CD4-positive, alpha-beta T cell (primary cell): ENCODE measurements at regions of chr2 and their contacts with region 1.

Region 1: DNA sequence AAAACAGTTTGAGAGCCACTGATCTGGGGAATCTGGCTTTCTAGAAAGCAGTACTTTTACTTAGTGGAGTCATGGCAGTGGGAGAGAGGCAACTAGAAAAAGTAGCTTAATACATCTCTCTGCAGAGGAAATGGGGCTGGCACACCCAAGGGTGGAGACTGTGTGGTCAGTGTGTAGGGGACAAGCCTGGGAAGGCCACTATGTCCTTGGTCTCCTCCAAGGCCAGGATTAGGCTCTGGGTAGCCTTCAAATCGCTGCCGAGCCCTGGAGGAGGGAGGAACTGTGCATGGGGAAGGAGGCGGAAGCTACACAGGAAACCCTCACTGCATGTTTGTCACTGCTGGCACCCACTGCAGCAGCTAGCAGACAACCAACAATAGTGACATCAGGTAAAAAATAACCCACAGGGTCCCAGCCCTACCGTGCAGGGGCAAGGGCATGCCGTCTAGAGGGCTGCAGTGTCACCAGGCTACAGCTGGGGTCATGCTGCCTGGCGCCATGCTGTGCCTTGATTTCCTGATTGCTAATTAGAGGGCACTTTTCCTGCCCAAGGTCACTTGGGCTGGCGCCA is 34.8 kb downstream of the LBH start:
- DNase-seq: peak; percentile 53 to 84 (median 70)
- ATAC-seq: peak; percentile 92
- H3K4me3 ChIP-seq: peak overlapping the region; percentile 36
- H3K4me3 Mint-ChIP-seq: peak overlapping the region; percentile 88
- H3K27ac ChIP-seq: peak overlapping the region; percentile 65 to 91
- H3K27ac Mint-ChIP-seq: peak overlapping the region; percentile 95
- H3K4me1 ChIP-seq: peaks cover 59% of the 10 kb centered on the region
- H3K4me1 Mint-ChIP-seq: peaks cover 87% of the 10 kb centered on the region
- H3K27me3 ChIP-seq: no peaks in the 10 kb centered on the region
- H3K27me3 Mint-ChIP-seq: no peaks in the 10 kb centered on the region
- CTCF ChIP-seq: no peak

Region 2: GRCh38 chr2:30208452-30208851 is 57.7 kb before region 1 on chr2:
- CTCF ChIA-PET with region 1: no interaction called
- POLR2A ChIA-PET with region 1: interaction called, 16 read pairs
- intact Hi-C with region 1: no loop called
- DNase-seq: peak in 10 of 14 experiments; percentile 16 to 74 (median 33)
- ATAC-seq: peak; percentile 58
- H3K4me3 ChIP-seq: no peak overlapping the region
- H3K4me3 Mint-ChIP-seq: peak overlapping the region; percentile 42
- H3K27ac ChIP-seq: peak overlapping the region in 1 of 2 donors; percentile 9
- H3K27ac Mint-ChIP-seq: peak overlapping the region; percentile 82
- H3K4me1 ChIP-seq: peaks cover 21% of the 10 kb centered on the region
- H3K4me1 Mint-ChIP-seq: peaks cover 31% of the 10 kb centered on the region
- H3K27me3 ChIP-seq: no peaks in the 10 kb centered on the region
- H3K27me3 Mint-ChIP-seq: no peaks in the 10 kb centered on the region
- CTCF ChIP-seq: peak; percentile 96

Region 3: GRCh38 chr2:30239308-30239985 is 26.7 kb before region 1 on chr2:
- CTCF ChIA-PET with region 1: interaction called, 23 read pairs
- POLR2A ChIA-PET with region 1: interaction called, 373 read pairs
- intact Hi-C with region 1: loop called in 1 of 2 experiments (anchors 5 kb)
- DNase-seq: peak; percentile 49 to 91 (median 71)
- ATAC-seq: peak; percentile 79
- H3K4me3 ChIP-seq: peak overlapping the region; percentile 12
- H3K4me3 Mint-ChIP-seq: peak overlapping the region; percentile 82
- H3K27ac ChIP-seq: peak overlapping the region in 1 of 2 donors; percentile 42
- H3K27ac Mint-ChIP-seq: peak overlapping the region; percentile 99
- H3K4me1 ChIP-seq: peaks cover 89% of the 10 kb centered on the region
- H3K4me1 Mint-ChIP-seq: peaks cover 96% of the 10 kb centered on the region
- H3K27me3 ChIP-seq: no peaks in the 10 kb centered on the region
- H3K27me3 Mint-ChIP-seq: no peaks in the 10 kb centered on the region
- CTCF ChIP-seq: peak; percentile 85

Region 4: GRCh38 chr2:30287857-30288513 is 21.8 kb after region 1 on chr2:
- CTCF ChIA-PET with region 1: no interaction called
- POLR2A ChIA-PET with region 1: interaction called, 11 read pairs
- intact Hi-C with region 1: no loop called
- DNase-seq: no peak
- ATAC-seq: no peak
- H3K4me3 ChIP-seq: no peak overlapping the region
- H3K4me3 Mint-ChIP-seq: peak overlapping the region; percentile 2
- H3K27ac ChIP-seq: no peak overlapping the region
- H3K27ac Mint-ChIP-seq: peak overlapping the region; percentile 3
- H3K4me1 ChIP-seq: peaks cover 10% of the 10 kb centered on the region
- H3K4me1 Mint-ChIP-seq: peaks cover 30% of the 10 kb centered on the region
- H3K27me3 ChIP-seq: no peaks in the 10 kb centered on the region
- H3K27me3 Mint-ChIP-seq: no peaks in the 10 kb centered on the region
- CTCF ChIP-seq: no peak

Region 5: GRCh38 chr2:30336978-30337841 is 71.1 kb after region 1 on chr2:
- CTCF ChIA-PET with region 1: interaction called, 5 read pairs
- POLR2A ChIA-PET with region 1: interaction called, 93 read pairs
- intact Hi-C with region 1: loop called (anchors 2 to 5 kb)
- DNase-seq: peak in 13 of 14 experiments; percentile 21 to 84 (median 52)
- ATAC-seq: peak; percentile 77
- H3K4me3 ChIP-seq: peak overlapping the region; percentile 20
- H3K4me3 Mint-ChIP-seq: peak overlapping the region; percentile 80
- H3K27ac ChIP-seq: peak overlapping the region; percentile 54 to 68
- H3K27ac Mint-ChIP-seq: peak overlapping the region; percentile 98
- H3K4me1 ChIP-seq: peaks cover 76% of the 10 kb centered on the region
- H3K4me1 Mint-ChIP-seq: peaks cover 87% of the 10 kb centered on the region
- H3K27me3 ChIP-seq: no peaks in the 10 kb centered on the region
- H3K27me3 Mint-ChIP-seq: no peaks in the 10 kb centered on the region
- CTCF ChIP-seq: no peak

Region 6: DNA sequence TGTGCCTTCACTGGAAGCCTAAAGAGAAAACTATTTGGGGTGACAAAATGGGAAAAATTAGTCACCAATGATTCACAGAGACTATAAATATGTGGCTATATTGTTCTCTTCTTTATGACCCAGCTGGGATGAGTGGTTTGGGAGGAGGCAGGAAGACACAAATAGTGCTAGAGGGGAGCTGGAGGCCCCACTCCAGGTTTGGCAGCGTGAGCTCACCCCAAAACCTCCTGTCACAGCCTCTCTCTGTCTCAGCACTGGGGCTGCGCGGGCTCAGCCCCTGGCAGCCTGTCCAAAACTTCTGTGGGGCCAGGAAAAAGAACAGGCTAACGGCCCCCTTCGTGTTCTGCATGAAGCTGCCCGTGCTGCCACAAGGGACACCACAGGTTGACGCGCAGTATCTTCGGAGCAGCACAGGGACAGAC is 107.8 kb after region 1 on chr2:
- CTCF ChIA-PET with region 1: no interaction called
- POLR2A ChIA-PET with region 1: no interaction called
- intact Hi-C with region 1: no loop called
- DNase-seq: no peak
- ATAC-seq: no peak
- H3K4me3 ChIP-seq: no peak overlapping the region
- H3K4me3 Mint-ChIP-seq: no peak overlapping the region
- H3K27ac ChIP-seq: no peak overlapping the region
- H3K27ac Mint-ChIP-seq: no peak overlapping the region
- H3K4me1 ChIP-seq: no peaks in the 10 kb centered on the region
- H3K4me1 Mint-ChIP-seq: no peaks in the 10 kb centered on the region
- H3K27me3 ChIP-seq: no peaks in the 10 kb centered on the region
- H3K27me3 Mint-ChIP-seq: no peaks in the 10 kb centered on the region
- CTCF ChIP-seq: no peak

Region 7: DNA sequence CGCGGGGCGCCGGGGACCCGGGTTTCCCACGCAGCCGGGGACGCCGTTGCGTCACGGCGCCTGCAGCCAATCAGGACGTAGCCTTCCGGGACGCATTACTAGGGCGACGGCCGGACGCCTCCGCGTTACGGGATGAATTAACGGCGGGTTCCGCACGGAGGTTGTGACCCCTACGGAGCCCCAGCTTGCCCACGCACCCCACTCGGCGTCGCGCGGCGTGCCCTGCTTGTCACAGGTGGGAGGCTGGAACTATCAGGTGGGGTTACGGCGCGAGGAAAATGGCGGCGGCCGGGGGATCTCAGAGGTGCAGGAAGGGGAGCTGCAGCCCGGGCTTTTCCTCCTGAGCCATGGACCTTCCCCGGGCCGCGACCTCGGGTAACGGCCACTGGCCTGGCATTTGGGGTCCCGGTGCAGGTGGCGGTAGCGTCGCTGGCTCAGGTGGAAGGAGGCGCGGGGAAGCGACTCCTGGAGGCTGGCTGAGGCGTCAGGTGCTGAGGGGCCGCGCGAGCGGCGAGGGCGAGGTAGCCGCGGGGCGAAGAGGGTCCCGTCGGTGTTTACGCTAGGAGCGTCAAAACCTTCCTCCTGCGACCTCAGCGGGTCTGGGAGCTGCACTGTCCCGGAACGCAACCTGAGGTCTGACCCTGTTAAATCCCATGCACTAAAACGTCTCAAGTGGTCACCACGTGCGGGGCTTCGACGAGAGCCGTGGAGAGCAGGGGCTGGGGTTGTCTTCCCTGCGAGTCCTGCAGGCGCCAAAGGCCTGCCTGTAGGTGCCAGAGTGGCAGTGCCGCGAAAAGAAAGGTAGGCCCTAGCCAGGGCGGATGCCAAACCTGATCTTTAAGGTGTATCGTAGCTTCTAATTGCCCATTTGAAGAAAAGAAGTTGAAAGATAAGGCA is 181.3 kb after region 1 on chr2 and contains the start of gene LCLAT1:
- CTCF ChIA-PET with region 1: interaction called, 3 read pairs
- POLR2A ChIA-PET with region 1: interaction called, 5 read pairs
- intact Hi-C with region 1: loop called in 1 of 2 experiments (anchors 10 kb)
- DNase-seq: peak; percentile 68 to 94 (median 78)
- ATAC-seq: peak; percentile 84
- H3K4me3 ChIP-seq: peak within 1 kb of the TSS; percentile 82
- H3K4me3 Mint-ChIP-seq: peak within 1 kb of the TSS; percentile 99
- H3K27ac ChIP-seq: peak within 1 kb of the TSS; percentile 81 to 85
- H3K27ac Mint-ChIP-seq: peak within 1 kb of the TSS; percentile 99
- H3K4me1 ChIP-seq: peaks cover 14% of the 10 kb centered on the region
- H3K4me1 Mint-ChIP-seq: peaks cover 54% of the 10 kb centered on the region
- H3K27me3 ChIP-seq: no peaks in the 10 kb centered on the region
- H3K27me3 Mint-ChIP-seq: no peaks in the 10 kb centered on the region
- CTCF ChIP-seq: no peak
- total RNA-seq, gene LCLAT1: 8.3 to 10.2 TPM

Region 8: DNA sequence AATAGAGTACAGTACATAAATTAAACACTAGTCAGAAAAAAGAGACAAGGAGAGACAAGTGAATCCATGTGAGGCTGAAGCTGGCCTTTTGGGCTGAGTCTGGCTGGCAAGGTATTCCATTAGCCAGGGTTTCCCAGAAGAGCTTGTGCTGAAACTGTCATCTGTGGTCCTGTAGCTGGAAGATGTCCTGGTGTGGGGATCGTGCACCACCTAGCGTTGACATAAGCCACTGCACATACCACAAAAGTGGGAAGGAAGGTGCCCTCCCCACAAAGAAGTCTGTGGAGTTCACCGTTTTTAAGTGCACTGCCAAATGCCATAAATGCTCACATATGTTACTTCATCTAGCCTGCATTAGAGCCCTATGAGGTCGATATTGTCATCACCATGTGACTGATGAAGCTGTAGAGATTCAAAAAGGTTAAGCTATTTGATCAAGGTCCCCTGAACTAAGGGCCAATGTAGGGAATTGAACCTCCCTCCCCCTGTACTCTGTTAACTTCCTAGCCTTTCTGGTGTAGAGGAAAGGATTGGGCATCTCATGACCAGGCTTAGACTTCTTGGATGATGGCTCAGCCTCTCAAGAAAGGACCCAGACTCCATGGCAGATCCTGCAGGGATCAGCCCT is 904.0 kb after region 1 on chr2:
- CTCF ChIA-PET with region 1: no interaction called
- POLR2A ChIA-PET with region 1: no interaction called
- intact Hi-C with region 1: no loop called
- DNase-seq: peak in 12 of 14 experiments; percentile 9 to 73 (median 32)
- ATAC-seq: peak; percentile 54
- H3K4me3 ChIP-seq: no peak overlapping the region
- H3K4me3 Mint-ChIP-seq: no peak overlapping the region
- H3K27ac ChIP-seq: no peak overlapping the region
- H3K27ac Mint-ChIP-seq: no peak overlapping the region
- H3K4me1 ChIP-seq: no peaks in the 10 kb centered on the region
- H3K4me1 Mint-ChIP-seq: peaks cover 4% of the 10 kb centered on the region
- H3K27me3 ChIP-seq: no peaks in the 10 kb centered on the region
- H3K27me3 Mint-ChIP-seq: no peaks in the 10 kb centered on the region
- CTCF ChIP-seq: peak; percentile 73